ENCODE measurements at regions of chr12 and their contacts with region 1.

Region 1: GRCh38 chr12:125402874-125403789 is 337.9 kb downstream of the AACS start:
- DNase-seq: no peak
- ATAC-seq: no peak

Region 2: GRCh38 chr12:125038976-125039625 is 364.0 kb before region 1 on chr12:
- intact Hi-C with region 1: no loop called
- DNase-seq: no peak
- ATAC-seq: no peak

Region 3: DNA sequence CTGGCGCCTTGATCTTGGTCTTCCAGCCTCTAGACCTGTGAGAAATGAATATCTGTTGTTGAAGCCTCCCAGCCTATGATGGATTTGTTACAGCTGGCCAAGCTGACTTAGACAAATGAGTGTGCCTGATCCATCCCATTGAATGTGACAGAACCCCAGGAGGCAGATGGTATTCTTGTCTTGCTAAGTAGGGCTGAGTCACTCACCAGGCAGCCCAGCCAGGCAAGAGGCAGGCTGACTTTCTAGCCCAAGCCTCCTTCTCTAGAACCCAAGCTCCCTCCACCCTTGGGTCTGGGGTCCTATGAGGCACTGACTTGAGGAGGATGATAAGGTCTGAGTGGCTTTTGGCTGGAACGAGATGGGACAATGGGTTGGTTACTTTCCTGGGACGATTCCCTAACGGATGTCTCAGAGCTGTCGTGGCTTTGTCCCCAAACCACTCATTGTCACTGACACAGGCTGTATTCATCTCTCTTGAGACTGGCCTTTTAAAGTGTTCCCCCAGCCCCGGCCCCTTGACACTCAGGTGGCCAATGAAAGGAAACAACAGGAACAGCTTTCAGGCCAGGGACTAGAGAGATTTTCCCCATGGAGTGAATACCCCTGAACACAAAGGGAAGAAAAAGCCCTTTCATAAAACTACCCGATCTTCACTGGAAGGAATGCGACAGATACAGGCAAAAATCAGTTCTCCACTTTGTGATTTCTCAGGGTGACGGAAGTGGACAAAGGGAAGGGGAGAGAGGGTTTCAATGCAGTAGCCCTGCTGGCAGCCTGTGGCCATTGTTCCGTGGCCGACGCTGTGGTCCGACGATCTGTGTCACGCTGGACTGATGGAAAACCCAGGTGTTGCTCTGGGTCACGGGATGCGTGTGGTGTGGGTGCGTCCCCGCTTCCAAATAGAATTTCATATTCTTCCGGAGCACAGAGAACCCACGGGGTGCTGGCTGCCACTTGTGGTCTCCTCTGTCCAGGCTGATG is 73.6 kb before region 1 on chr12:
- intact Hi-C with region 1: loop called (anchors 5 kb)
- DNase-seq: no peak
- ATAC-seq: no peak

Region 4: DNA sequence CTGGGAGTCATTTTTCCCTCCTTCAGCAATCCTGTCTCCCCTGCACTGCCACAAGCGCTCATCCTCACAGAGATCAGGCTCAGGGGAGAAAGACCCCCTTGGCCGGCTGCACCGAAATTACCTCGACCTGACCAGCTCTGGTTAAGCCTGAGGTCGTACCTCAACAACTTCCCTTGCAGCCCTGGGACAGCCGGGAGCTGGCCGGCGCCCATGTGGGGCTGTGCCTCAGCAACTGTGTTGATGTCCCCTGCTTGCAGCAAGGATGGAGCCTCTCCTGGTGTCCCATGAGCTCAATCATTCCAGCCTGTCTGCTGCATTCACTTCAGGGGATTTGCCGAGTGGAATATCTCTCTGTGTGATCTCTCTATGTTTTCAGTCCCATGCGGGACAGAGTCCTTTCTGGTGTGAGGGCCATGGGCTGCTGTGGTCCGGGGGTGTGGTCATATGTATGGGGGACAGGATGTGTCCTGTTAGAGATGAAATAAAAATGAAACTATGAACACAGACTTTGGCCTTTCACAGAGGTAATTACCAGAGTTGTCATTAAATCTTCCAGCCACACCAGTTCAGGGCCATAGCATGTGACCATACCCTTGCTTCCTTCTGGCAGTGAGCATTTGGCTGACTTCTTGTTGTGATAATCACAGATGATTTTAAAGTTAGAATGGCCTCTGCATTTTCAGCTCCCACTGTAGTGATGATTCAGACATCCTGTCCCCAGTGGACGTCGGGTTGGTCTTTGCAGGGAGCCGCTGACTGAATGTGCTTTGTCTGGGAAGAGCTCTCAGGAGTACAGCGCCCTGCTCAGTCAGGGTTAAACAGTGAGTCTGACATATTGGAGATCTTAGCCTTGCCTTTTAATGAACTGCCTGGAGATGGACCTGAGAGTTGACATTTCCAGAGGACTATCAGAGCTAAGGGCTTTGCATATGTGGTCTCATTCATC is 68.0 kb after region 1 on chr12:
- intact Hi-C with region 1: no loop called
- DNase-seq: no peak
- ATAC-seq: no peak

Region 5: GRCh38 chr12:125905725-125906124 is 502.6 kb after region 1 on chr12:
- intact Hi-C with region 1: no loop called
- DNase-seq: no peak
- ATAC-seq: no peak

Measured in Right ventricle myocardium superior (tissue), 1 donor.